ENCODE measurements at regions of chr10 and their contacts with region 1.

Region 1: GRCh38 chr10:101889256-101890210 is 45.9 kb upstream of the KCNIP2 start:
- DNase-seq: peak; percentile 42 to 61 (median 52)
- H3K4me3 ChIP-seq: no peak overlapping the region
- H3K4me3 Mint-ChIP-seq: no peak overlapping the region
- H3K27ac ChIP-seq: no peak overlapping the region
- H3K27ac Mint-ChIP-seq: peak overlapping the region in 3 of 7 donors; percentile 3 to 5 (median 3)
- H3K4me1 ChIP-seq: no peaks in the 10 kb centered on the region
- H3K4me1 Mint-ChIP-seq: peaks cover 0 to 4% (median under 1%) of the 10 kb centered on the region in 4 donors
- H3K27me3 ChIP-seq: no peaks in the 10 kb centered on the region
- H3K27me3 Mint-ChIP-seq: no peaks in the 10 kb centered on the region

Region 2: DNA sequence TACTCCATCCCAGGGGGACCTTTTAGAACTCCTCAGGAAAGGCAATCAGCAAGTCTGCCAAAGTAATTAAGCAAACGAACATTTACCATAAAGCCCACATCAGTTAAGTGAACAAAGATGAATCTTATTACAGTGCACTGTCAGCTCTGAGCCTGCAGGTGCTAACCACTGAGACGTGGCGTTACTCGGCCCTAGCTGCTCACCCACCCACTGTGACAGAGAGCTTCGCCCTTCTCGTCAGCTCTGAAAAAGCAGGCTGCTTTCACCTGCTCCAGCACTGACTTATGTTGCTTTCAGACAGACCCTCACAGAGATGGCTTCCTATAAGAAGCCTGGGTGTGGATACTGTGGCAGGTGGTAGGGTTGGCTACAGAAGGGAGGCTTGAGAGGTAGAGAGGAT is 11.8 kb after region 1 on chr10:
- CTCF ChIA-PET with region 1: interaction called, 16 read pairs
- POLR2A ChIA-PET with region 1: no interaction called
- intact Hi-C with region 1: no loop called
- DNase-seq: no peak
- H3K4me3 ChIP-seq: no peak overlapping the region
- H3K4me3 Mint-ChIP-seq: no peak overlapping the region
- H3K27ac ChIP-seq: no peak overlapping the region
- H3K27ac Mint-ChIP-seq: peak overlapping the region in 2 of 7 donors; percentile 22 to 53
- H3K4me1 ChIP-seq: no peaks in the 10 kb centered on the region
- H3K4me1 Mint-ChIP-seq: peaks cover 0 to 14% (median 3%) of the 10 kb centered on the region in 4 donors
- H3K27me3 ChIP-seq: no peaks in the 10 kb centered on the region
- H3K27me3 Mint-ChIP-seq: no peaks in the 10 kb centered on the region

Measured in CD4-positive, alpha-beta memory T cell (primary cell).